CD8-positive, alpha-beta memory T cell (primary cell): ENCODE measurements at regions of chr18 and their contacts with region 1.

Region 1: GRCh38 chr18:58768293-58768974 is 96.2 kb upstream of the ZNF532 start:
- DNase-seq: peak; percentile 21 to 63 (median 41)
- H3K4me3 ChIP-seq: no peak overlapping the region
- H3K4me3 Mint-ChIP-seq: peak overlapping the region in 5 of 7 donors; percentile 16 to 66 (median 50)
- H3K27ac ChIP-seq: no peak overlapping the region
- H3K27ac Mint-ChIP-seq: no peak overlapping the region
- H3K4me1 ChIP-seq: peaks cover 8% of the 10 kb centered on the region
- H3K4me1 Mint-ChIP-seq: peaks cover 10 to 15% (median 15%) of the 10 kb centered on the region in 3 donors
- H3K27me3 ChIP-seq: peaks cover 6% of the 10 kb centered on the region
- H3K27me3 Mint-ChIP-seq: peaks cover 19 to 72% of the 10 kb centered on the region in 2 donors

Region 2: DNA sequence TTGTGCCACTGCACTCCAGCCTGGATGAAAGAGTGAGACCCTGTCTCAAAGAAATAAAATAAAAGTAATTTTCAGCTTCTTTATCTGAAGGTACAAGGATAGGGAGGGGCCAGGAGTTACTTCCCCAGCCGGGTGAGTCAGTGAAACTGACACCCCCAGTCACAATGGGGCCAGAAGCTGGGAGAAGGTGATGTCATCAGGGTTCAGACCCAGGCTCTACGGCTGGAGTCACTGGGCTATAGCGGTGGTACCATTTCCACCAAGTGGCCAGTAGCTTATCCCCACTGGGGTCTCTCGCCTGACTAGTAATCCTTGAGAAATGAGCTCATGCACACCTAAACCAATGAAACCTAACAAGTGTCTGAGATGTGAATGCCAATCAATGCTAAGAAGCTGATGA is 247.5 kb before region 1 on chr18:
- CTCF ChIA-PET with region 1: interaction called, 240 read pairs
- POLR2A ChIA-PET with region 1: no interaction called
- DNase-seq: no peak
- H3K4me3 ChIP-seq: no peak overlapping the region
- H3K4me3 Mint-ChIP-seq: no peak overlapping the region
- H3K27ac ChIP-seq: no peak overlapping the region
- H3K27ac Mint-ChIP-seq: no peak overlapping the region
- H3K4me1 ChIP-seq: no peaks in the 10 kb centered on the region
- H3K4me1 Mint-ChIP-seq: peaks cover 0 to 2% (median 0%) of the 10 kb centered on the region in 3 donors
- H3K27me3 ChIP-seq: peaks cover 8% of the 10 kb centered on the region
- H3K27me3 Mint-ChIP-seq: peaks cover 17 to 51% of the 10 kb centered on the region in 2 donors

Region 3: DNA sequence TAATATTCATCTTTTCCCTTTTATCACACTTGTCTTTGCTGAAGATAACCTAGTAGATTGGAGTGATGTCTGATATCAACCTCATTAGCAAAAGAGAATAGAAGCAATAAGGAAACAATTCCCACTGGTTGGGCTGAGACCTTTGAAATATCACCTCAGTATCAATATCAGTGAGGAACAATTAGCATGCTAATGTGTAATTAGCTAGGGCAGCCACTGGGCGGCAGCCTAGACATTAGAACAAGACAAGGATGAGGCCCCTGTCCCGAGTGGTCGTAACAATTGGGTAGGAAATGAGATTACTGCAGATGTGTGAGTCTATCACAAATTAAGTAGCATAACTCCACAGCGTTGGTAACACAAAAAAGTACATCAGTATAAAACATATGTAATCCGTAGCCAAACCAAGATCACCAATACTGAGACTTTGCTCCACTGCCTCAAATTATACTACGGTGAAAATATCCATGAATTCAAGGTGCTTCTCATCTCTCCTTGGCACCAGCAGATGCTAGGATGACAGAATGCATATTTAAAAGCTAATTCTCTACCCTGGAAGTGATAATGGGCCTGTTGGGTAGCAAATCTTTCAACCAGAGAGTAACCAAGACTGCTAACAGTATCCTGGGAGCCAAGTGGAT is 238.6 kb before region 1 on chr18:
- CTCF ChIA-PET with region 1: interaction called, 240 read pairs
- POLR2A ChIA-PET with region 1: interaction called, 3 read pairs
- DNase-seq: peak; percentile 52 to 80 (median 57)
- H3K4me3 ChIP-seq: no peak overlapping the region
- H3K4me3 Mint-ChIP-seq: no peak overlapping the region
- H3K27ac ChIP-seq: no peak overlapping the region
- H3K27ac Mint-ChIP-seq: no peak overlapping the region
- H3K4me1 ChIP-seq: no peaks in the 10 kb centered on the region
- H3K4me1 Mint-ChIP-seq: peaks cover 2 to 5% (median 4%) of the 10 kb centered on the region in 3 donors
- H3K27me3 ChIP-seq: no peaks in the 10 kb centered on the region
- H3K27me3 Mint-ChIP-seq: peaks cover 12 to 21% of the 10 kb centered on the region in 2 donors

Region 4: GRCh38 chr18:58535340-58536201 is 232.9 kb before region 1 on chr18:
- CTCF ChIA-PET with region 1: interaction called, 240 read pairs
- POLR2A ChIA-PET with region 1: no interaction called
- DNase-seq: no peak
- H3K4me3 ChIP-seq: no peak overlapping the region
- H3K4me3 Mint-ChIP-seq: no peak overlapping the region
- H3K27ac ChIP-seq: no peak overlapping the region
- H3K27ac Mint-ChIP-seq: no peak overlapping the region
- H3K4me1 ChIP-seq: no peaks in the 10 kb centered on the region
- H3K4me1 Mint-ChIP-seq: peaks cover 0 to 6% (median 1%) of the 10 kb centered on the region in 3 donors
- H3K27me3 ChIP-seq: no peaks in the 10 kb centered on the region
- H3K27me3 Mint-ChIP-seq: peaks cover 3 to 4% of the 10 kb centered on the region in 2 donors

Region 5: DNA sequence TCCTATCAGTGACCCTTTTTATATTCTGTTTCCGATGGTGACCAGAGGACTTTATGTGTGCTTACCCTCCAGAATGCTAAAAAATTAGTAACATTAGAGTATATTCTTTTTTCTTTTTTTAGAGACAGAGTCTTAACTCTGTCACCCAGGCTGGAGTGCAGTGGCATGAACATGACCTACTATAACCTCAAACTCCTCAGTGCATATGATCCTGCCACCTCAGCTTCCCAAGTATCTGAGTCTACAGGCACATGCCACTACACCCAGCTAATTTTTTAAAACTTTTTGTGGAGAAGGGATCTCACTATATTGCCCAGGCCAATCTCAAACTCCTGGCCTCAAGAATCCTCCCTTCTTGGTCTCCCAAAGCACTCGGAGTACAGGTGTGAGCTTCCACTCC is 22.5 kb before region 1 on chr18:
- CTCF ChIA-PET with region 1: interaction called, 15 read pairs
- POLR2A ChIA-PET with region 1: no interaction called
- DNase-seq: no peak
- H3K4me3 ChIP-seq: no peak overlapping the region
- H3K4me3 Mint-ChIP-seq: no peak overlapping the region
- H3K27ac ChIP-seq: no peak overlapping the region
- H3K27ac Mint-ChIP-seq: peak overlapping the region in 2 of 8 donors; percentile 26 to 43
- H3K4me1 ChIP-seq: no peaks in the 10 kb centered on the region
- H3K4me1 Mint-ChIP-seq: peaks cover under 1 to 1% (median 1%) of the 10 kb centered on the region in 3 donors
- H3K27me3 ChIP-seq: no peaks in the 10 kb centered on the region
- H3K27me3 Mint-ChIP-seq: no peaks in the 10 kb centered on the region

Region 6: GRCh38 chr18:59070181-59070912 is 301.9 kb after region 1 on chr18:
- CTCF ChIA-PET with region 1: interaction called, 22 read pairs
- POLR2A ChIA-PET with region 1: no interaction called
- DNase-seq: peak; percentile 38 to 74 (median 58)
- H3K4me3 ChIP-seq: no peak overlapping the region
- H3K4me3 Mint-ChIP-seq: no peak overlapping the region
- H3K27ac ChIP-seq: no peak overlapping the region
- H3K27ac Mint-ChIP-seq: no peak overlapping the region
- H3K4me1 ChIP-seq: no peaks in the 10 kb centered on the region
- H3K4me1 Mint-ChIP-seq: no peaks in the 10 kb centered on the region
- H3K27me3 ChIP-seq: no peaks in the 10 kb centered on the region
- H3K27me3 Mint-ChIP-seq: peaks cover 0 to 3% of the 10 kb centered on the region in 2 donors

Region 7: GRCh38 chr18:59517446-59518165 is 749.2 kb after region 1 on chr18:
- CTCF ChIA-PET with region 1: no interaction called
- POLR2A ChIA-PET with region 1: no interaction called
- DNase-seq: no peak
- H3K4me3 ChIP-seq: no peak overlapping the region
- H3K4me3 Mint-ChIP-seq: no peak overlapping the region
- H3K27ac ChIP-seq: no peak overlapping the region
- H3K27ac Mint-ChIP-seq: no peak overlapping the region
- H3K4me1 ChIP-seq: no peaks in the 10 kb centered on the region
- H3K4me1 Mint-ChIP-seq: no peaks in the 10 kb centered on the region
- H3K27me3 ChIP-seq: no peaks in the 10 kb centered on the region
- H3K27me3 Mint-ChIP-seq: peaks cover 6 to 9% of the 10 kb centered on the region in 2 donors